ENCODE measurements at regions of chr20 and their contacts with region 1.

Region 1: GRCh38 chr20:35117196-35117595 is 24.6 kb upstream of the TRPC4AP start:
- DNase-seq: no peak
- H3K4me3 ChIP-seq: no peak overlapping the region
- H3K27ac ChIP-seq: no peak overlapping the region
- H3K4me1 ChIP-seq: no peaks in the 10 kb centered on the region
- H3K27me3 ChIP-seq: no peaks in the 10 kb centered on the region
- CTCF ChIP-seq: no peak

Region 2: GRCh38 chr20:34861386-34862084 is 255.7 kb before region 1 on chr20:
- CTCF ChIA-PET with region 1: no interaction called
- dilution Hi-C with region 1: no loop called
- in situ Hi-C with region 1: no loop called
- intact Hi-C with region 1: no loop called
- DNase-seq: no peak
- H3K4me3 ChIP-seq: no peak overlapping the region
- H3K27ac ChIP-seq: no peak overlapping the region
- H3K4me1 ChIP-seq: no peaks in the 10 kb centered on the region
- H3K27me3 ChIP-seq: no peaks in the 10 kb centered on the region
- CTCF ChIP-seq: no peak

Region 3: DNA sequence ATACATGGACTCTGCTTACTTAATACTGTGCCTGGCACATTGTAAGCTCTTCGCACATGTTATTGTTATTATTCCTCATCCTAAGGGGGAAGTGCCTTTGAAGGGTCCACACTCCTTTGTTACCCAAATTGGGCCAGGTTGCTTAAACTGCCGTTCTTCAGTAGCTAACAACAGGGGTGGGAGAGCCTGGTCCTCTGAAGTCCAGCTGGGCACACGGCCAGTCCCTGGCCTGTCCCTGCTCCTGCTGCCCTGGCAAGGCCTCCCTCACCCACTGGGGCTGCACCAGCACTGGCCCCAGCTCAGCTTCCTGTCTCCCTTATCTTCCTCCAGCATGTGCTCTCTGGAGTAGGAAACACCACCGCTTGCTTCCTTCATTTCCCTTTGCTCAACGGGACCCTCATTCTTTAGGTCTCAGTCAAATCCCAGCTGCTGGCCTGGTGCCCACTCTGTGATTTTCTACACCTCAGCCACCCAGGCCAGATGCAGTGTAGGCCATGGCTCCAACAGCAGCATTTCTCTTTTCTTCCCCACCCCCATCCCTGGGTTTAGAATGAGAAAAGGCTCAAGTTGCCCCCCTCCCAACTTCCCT is 49.1 kb after region 1 on chr20:
- CTCF ChIA-PET with region 1: no interaction called
- dilution Hi-C with region 1: loop called (anchors 5 kb)
- in situ Hi-C with region 1: no loop called
- intact Hi-C with region 1: no loop called
- DNase-seq: no peak
- H3K4me3 ChIP-seq: no peak overlapping the region
- H3K27ac ChIP-seq: no peak overlapping the region
- H3K4me1 ChIP-seq: peaks cover 5% of the 10 kb centered on the region
- H3K27me3 ChIP-seq: no peaks in the 10 kb centered on the region
- CTCF ChIP-seq: no peak

Region 4: DNA sequence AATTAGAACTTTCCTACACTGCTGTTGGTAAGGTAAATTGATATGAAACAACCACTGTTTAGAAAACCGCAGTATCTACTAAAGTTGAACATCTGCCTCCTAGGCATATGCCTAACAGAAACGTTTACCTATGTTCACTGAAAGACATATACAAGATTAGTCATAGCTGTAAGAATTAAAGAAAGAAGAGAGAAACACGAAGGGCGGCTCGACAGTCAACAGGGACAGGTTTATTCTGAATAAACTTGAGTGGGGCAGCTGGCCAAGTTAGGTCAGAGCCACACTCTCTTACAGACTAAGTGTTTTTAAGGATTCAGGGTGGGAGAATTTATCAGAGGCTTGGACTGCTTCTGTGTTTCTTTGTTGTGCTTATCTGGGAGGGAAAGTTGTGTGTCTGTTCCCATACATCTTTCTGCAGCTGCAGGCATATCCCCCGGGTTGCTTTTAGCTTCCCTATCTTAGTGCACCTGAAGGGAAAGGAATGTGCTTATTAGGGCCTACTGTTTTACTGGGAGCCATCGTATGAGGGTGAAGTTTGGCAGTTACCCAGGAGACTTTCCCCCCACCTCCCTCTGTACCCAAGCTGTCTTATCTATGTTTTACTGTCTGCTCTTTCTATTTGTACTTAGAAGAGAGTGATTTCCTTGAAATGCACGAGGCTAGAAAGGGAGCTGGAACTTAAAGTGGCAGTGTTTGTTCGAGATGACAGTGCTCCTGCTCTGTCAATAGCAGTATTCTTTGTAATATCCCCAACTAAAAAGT is 75.1 kb after region 1 on chr20:
- CTCF ChIA-PET with region 1: no interaction called
- dilution Hi-C with region 1: loop called (anchors 5 kb)
- in situ Hi-C with region 1: no loop called
- intact Hi-C with region 1: no loop called
- DNase-seq: peak; percentile 4
- H3K4me3 ChIP-seq: no peak overlapping the region
- H3K27ac ChIP-seq: no peak overlapping the region
- H3K4me1 ChIP-seq: no peaks in the 10 kb centered on the region
- H3K27me3 ChIP-seq: no peaks in the 10 kb centered on the region
- CTCF ChIP-seq: no peak